ENCODE measurements at regions of chr2 and their contacts with region 1.

Region 1: DNA sequence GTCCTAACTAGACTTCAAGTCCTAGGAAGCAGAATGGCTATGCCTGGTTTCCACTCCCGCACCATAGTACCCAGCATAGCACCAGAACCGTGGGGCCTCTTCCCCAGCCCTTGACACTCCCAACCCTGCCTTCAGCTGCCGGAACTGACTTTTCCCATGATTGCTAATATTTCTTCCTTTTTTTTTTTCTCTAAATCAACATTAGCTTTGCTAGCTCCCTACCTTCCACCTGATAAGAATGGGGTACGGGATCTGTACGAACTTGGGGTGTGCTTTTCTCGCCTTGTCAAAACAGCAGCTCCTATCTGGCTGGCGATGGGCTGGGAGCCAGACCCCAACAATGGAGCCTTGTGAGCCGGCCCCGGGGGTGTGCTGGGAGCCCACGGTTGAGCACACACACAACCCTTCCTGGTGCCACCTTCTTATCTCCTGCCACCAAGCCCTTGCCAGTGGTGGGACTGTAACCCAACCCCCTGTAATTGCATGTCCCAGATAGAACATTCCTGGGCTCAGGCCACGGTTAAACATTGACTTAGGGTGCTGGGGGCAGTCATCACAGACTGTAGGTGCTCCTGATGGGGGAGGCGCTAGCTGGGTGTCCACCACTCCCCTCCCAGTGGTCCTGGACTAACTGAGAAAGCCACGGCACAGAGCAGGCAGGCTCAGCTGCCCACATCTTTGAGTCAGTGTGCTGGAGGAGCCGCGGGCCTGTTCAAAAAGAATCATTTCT is 213.0 kb upstream of the HAAO start:
- DNase-seq: no peak
- H3K4me3 ChIP-seq: no peak overlapping the region
- CTCF ChIP-seq: no peak

Region 2: GRCh38 chr2:42931146-42931817 is 74.1 kb before region 1 on chr2:
- in situ Hi-C with region 1: loop called (anchors 5 kb)
- DNase-seq: no peak
- H3K4me3 ChIP-seq: no peak overlapping the region
- CTCF ChIP-seq: peak; percentile 55

Region 3: GRCh38 chr2:42964439-42965083 is 40.8 kb before region 1 on chr2:
- in situ Hi-C with region 1: loop called (anchors 5 kb)
- DNase-seq: peak; percentile 94
- H3K4me3 ChIP-seq: no peak overlapping the region
- CTCF ChIP-seq: no peak

Region 4: GRCh38 chr2:43041661-43042360 is 36.4 kb after region 1 on chr2:
- in situ Hi-C with region 1: loop called (anchors 5 kb)
- DNase-seq: peak; percentile 99
- H3K4me3 ChIP-seq: no peak overlapping the region
- CTCF ChIP-seq: no peak

Region 5: DNA sequence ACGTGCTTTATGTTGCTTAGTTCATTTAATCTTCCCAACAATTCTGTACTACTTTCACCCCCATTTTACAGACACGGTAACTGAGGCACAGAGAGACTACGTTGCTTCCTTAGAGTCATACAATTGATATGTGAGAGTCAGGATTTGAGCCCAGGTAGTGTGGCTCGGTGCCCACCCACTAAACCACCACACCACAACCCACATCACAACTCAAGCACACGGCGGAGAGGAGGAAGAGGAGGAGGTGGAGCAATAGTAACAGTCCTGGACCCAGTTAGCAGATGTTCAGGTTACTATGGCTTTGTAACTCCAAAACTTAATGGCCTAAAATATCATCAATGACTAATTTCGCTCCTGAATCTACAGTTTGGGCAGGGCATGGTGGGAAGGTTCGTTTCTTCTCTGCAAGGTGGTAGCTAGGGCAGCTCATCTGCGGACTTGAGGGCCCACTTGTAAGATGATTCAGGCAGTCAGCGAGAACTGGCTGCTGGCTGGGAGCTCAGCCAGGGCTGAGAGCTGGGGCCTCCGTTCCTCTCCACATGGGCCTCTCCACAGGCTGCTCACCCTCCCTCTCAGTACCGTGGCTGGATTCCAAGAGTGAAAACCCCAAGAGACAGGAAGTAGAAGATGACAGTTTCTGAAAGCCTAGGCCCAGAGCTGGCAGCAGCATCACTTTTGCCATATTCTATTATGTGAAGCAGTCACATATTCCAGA is 53.9 kb after region 1 on chr2:
- in situ Hi-C with region 1: no loop called
- DNase-seq: peak; percentile 88
- H3K4me3 ChIP-seq: no peak overlapping the region
- CTCF ChIP-seq: no peak